Activated CD4-positive, alpha-beta T cell treated with anti-CD3 and anti-CD28 coated beads, Interleukin-2, amount 10 ng/mL, durations not matched to agents 24 days and 14 days (primary cell): ENCODE measurements at regions of chr1 and their contacts with region 1.

Region 1: DNA sequence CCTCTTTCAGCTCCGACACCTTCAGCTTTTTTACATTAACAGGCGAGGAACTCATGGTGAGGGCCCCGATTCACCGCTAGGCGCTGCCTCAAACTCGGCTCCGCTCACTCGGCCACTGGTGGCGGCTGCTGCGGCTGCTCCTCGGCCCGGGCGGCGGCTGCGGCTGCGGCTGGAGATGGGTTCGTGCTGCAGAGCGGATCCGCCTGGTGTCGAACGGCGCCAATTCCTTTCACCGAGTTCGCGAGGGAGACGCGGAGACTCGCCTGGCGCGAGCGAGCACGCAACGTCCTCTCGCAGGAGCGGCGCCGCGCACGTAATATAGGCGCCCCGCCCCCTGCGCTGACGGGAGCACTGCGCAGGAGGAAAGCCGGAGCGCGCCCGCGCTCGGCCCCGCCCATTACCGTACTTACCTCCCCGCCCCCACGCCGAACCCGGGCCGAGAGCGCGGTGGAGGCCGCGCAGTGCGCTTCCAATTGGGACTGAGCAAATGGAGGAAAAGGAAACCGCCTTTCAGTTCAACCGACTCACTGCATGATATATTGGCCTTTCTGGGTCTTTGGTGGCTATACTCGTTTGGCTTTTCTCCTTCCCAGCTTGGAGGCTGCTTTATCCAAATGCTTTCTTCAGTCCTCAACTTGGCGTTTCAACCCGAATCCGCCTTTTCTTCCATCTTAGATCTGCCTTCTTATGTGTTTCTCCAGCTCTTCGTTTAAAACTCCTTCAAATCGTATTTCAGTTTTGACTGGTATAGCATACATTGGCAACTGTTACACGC is at the start of gene HNRNPU:
- DNase-seq: peak; percentile 99
- H3K4me3 Mint-ChIP-seq: peak within 1 kb of the TSS; percentile 98
- H3K27ac Mint-ChIP-seq: peak within 1 kb of the TSS; percentile 98
- H3K4me1 Mint-ChIP-seq: peaks cover 34% of the 10 kb centered on the region
- H3K27me3 Mint-ChIP-seq: no peaks in the 10 kb centered on the region
- total RNA-seq, gene HNRNPU: 611 and 612 TPM in 2 replicates

Region 2: DNA sequence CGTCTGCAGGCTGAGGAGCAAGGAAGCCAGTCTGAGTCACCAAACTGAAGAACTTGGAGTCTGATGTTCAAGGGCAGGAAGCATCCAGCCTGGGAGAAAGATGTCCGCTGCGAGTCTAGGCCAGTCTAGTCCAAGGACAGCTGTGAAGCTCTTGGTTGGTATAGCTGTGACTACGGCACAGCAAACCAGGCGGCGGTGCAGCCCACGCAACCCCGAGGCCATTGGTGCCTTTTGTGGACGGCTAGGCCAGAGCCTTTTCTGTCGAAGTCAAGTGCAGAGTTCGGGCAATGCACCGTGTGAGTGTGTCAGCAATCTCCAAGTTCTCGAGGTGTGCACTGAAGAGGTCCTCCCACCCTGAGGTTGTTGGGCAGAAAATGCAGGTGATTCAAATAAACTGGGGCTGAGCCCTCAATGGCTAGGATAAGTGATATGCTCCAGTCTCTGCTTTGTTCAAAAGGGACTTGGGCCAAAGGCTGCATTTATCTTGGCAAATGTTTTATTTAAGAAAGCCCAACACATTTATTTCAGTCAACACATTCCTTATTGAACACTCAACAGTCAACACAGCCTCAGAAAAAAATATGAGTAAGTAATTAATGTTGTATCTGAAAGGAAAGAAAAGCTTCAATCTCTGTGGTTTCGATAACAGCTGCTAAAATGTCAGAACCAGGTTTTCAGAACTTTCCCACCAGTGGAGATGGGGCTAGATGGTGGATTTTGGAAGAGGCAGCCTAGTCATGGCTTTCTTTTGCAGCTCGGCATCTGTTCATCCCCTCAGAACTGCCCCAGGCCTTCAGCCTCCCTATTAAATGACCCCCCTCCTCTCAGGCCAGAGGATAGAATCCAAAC is 107.1 kb before region 1 on chr1:
- intact Hi-C with region 1: no loop called
- DNase-seq: no peak
- H3K4me3 Mint-ChIP-seq: no peak overlapping the region
- H3K27ac Mint-ChIP-seq: no peak overlapping the region
- H3K4me1 Mint-ChIP-seq: no peaks in the 10 kb centered on the region
- H3K27me3 Mint-ChIP-seq: peaks cover 1% of the 10 kb centered on the region

Region 3: GRCh38 chr1:244835276-244836134 is 28.9 kb before region 1 on chr1 and contains the start of gene COX20:
- intact Hi-C with region 1: loop called (anchors 1 kb)
- DNase-seq: peak; percentile 97
- H3K4me3 Mint-ChIP-seq: peak within 1 kb of the TSS; percentile 91
- H3K27ac Mint-ChIP-seq: peak within 1 kb of the TSS; percentile 99
- H3K4me1 Mint-ChIP-seq: peaks cover 43% of the 10 kb centered on the region
- H3K27me3 Mint-ChIP-seq: no peaks in the 10 kb centered on the region
- total RNA-seq, gene COX20: 28.6 and 30.0 TPM in 2 replicates

Region 4: GRCh38 chr1:244918421-244919319 is 54.2 kb after region 1 on chr1:
- intact Hi-C with region 1: loop called (anchors 1 kb)
- DNase-seq: peak; percentile 85
- H3K4me3 Mint-ChIP-seq: peak overlapping the region; percentile 88
- H3K27ac Mint-ChIP-seq: peak overlapping the region; percentile 81
- H3K4me1 Mint-ChIP-seq: peaks cover 5% of the 10 kb centered on the region
- H3K27me3 Mint-ChIP-seq: peaks cover 28% of the 10 kb centered on the region

Region 5: DNA sequence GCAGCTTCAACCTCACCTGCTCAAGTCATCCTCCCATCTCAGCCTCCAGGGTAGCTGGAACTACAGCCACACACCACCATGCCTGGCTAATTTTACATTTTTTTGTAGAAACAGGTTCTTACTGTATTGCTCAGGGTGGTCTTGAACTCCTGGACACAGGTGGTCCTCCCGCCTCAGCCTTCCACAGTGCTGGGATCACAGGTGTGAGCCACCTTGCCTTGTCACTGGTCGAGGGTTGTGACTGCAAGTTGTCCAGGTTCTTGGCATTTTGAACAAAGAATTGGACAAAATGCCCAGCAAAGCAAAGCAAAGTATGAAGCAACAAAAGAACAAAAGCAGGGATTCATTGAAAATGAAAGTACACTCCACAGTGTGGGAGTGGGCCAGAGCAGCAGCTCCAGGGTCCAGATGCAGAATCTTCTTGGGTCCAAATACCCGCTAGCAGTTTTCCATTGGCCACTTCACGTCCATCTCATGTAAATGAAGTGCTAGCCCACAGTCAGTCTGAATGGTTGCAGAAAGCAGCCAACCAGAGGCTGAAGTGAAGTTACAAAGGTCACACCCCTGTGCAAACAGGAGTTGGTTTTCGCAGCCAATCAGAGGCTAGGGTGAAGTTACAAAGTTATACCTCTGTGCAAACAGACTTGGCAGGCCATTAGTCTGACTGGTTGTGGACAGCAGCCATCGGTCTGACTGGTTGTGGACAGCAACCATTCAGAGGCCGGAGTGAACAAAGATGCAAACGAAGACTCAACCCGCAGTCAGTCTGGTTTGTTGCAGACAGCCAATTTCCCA is 180.8 kb after region 1 on chr1:
- intact Hi-C with region 1: loop called (anchors 2 kb)
- DNase-seq: no peak
- H3K4me3 Mint-ChIP-seq: no peak overlapping the region
- H3K27ac Mint-ChIP-seq: no peak overlapping the region
- H3K4me1 Mint-ChIP-seq: no peaks in the 10 kb centered on the region
- H3K27me3 Mint-ChIP-seq: peaks cover 2% of the 10 kb centered on the region